Endothelial cell of umbilical vein (primary cell): ENCODE measurements at regions of chr1 and their contacts with region 1.

Region 1: GRCh38 chr1:110118636-110119615 is 6.7 kb downstream of the UBL4B start:
- DNase-seq: no peak
- H3K4me3 ChIP-seq: no peak overlapping the region
- H3K27ac ChIP-seq: no peak overlapping the region
- H3K4me1 ChIP-seq: no peaks in the 10 kb centered on the region
- H3K27me3 ChIP-seq: peaks cover 6 to 15% of the 10 kb centered on the region in 2 experiments
- CTCF ChIP-seq: no peak
- POLR2A ChIP-seq: no peak

Region 2: GRCh38 chr1:109739738-109740660 is 378.9 kb before region 1 on chr1:
- CTCF ChIA-PET with region 1: no interaction called
- POLR2A ChIA-PET with region 1: no interaction called
- dilution Hi-C with region 1: no loop called
- intact Hi-C with region 1: no loop called
- DNase-seq: peak; percentile 81
- H3K4me3 ChIP-seq: peak overlapping the region; percentile 41 to 69 (median 42)
- H3K27ac ChIP-seq: peak overlapping the region; percentile 17
- H3K4me1 ChIP-seq: peaks cover 12% of the 10 kb centered on the region
- H3K27me3 ChIP-seq: peaks cover 0 to 1% of the 10 kb centered on the region in 2 experiments
- CTCF ChIP-seq: no peak
- POLR2A ChIP-seq: peak; percentile 67

Region 3: DNA sequence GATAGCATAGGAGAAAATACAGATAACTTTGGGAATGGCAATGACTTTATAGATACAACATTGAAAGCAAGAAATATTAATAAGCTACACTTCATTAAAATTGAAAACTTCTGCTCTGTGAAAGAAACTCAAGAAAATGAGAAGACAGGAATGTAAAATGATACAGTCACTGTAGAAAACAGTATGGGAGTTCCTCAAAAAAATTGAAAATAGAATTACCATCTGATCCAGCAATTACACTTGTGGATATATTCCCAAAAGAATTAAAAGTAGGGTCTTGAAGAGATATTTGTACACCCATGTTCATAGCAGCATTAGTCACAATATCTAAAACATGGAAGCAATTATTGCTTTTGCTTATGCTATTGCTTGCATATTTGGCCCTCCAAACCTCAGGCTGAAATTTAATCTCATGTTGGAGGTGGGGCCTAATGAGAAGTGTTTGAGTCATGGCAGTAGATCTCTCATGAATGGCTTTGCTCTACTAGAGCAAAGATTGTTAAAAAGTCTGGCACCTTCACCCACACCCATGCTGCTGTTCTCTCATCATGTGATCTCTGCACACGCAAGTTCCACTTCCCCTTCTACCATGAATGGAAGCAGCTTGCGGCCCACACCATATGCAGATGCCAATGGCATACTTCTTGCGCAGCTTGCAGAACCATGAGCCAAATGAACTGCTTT is 149.6 kb before region 1 on chr1:
- CTCF ChIA-PET with region 1: no interaction called
- POLR2A ChIA-PET with region 1: no interaction called
- dilution Hi-C with region 1: no loop called
- intact Hi-C with region 1: no loop called
- DNase-seq: no peak
- H3K4me3 ChIP-seq: no peak overlapping the region
- H3K27ac ChIP-seq: no peak overlapping the region
- H3K4me1 ChIP-seq: peaks cover under 1% of the 10 kb centered on the region
- H3K27me3 ChIP-seq: no peaks in the 10 kb centered on the region
- CTCF ChIP-seq: no peak
- POLR2A ChIP-seq: no peak

Region 4: DNA sequence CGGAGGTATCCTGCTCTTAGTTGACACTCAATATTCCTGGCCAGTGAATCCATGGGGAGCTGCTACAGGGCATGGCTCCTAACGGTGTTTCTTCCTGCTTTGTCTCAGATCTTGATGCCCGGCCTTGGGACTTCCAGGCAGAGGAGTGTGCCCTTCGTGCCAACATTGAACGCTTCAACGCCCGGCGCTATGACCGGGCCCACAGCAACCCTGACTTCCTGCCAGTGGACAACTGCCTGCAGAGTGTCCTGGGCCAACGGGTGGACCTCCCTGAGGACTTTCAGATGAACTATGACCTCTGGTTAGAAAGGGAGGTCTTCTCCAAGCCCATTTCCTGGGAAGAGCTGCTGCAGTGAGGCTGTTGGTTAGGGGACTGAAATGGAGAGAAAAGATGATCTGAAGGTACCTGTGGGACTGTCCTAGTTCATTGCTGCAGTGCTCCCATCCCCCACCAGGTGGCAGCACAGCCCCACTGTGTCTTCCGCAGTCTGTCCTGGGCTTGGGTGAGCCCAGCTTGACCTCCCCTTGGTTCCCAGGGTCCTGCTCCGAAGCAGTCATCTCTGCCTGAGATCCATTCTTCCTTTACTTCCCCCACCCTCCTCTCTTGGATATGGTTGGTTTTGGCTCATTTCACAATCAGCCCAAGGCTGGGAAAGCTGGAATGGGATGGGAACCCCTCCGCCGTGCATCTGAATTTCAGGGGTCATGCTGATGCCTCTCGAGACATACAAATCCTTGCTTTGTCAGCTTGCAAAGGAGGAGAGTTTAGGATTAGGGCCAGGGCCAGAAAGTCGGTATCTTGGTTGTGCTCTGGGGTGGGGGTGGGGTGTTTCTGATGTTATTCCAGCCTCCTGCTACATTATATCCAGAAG is 65.1 kb before region 1 on chr1:
- CTCF ChIA-PET with region 1: interaction called, 11 read pairs
- POLR2A ChIA-PET with region 1: no interaction called
- dilution Hi-C with region 1: no loop called
- intact Hi-C with region 1: loop called (anchors 2 kb)
- DNase-seq: peak; percentile 39
- H3K4me3 ChIP-seq: no peak overlapping the region
- H3K27ac ChIP-seq: no peak overlapping the region
- H3K4me1 ChIP-seq: no peaks in the 10 kb centered on the region
- H3K27me3 ChIP-seq: no peaks in the 10 kb centered on the region
- CTCF ChIP-seq: peak; percentile 83 to 97
- POLR2A ChIP-seq: no peak

Region 5: GRCh38 chr1:110068646-110069403 is 50.1 kb before region 1 on chr1:
- CTCF ChIA-PET with region 1: no interaction called
- POLR2A ChIA-PET with region 1: no interaction called
- dilution Hi-C with region 1: no loop called
- intact Hi-C with region 1: no loop called
- DNase-seq: peak; percentile 18
- H3K4me3 ChIP-seq: no peak overlapping the region
- H3K27ac ChIP-seq: no peak overlapping the region
- H3K4me1 ChIP-seq: no peaks in the 10 kb centered on the region
- H3K27me3 ChIP-seq: peaks cover 67 to 79% of the 10 kb centered on the region in 2 experiments
- CTCF ChIP-seq: no peak
- POLR2A ChIP-seq: no peak

Region 6: GRCh38 chr1:110106013-110106941 is 12.6 kb before region 1 on chr1:
- CTCF ChIA-PET with region 1: interaction called, 30 read pairs
- POLR2A ChIA-PET with region 1: no interaction called
- dilution Hi-C with region 1: no loop called
- intact Hi-C with region 1: no loop called
- DNase-seq: peak; percentile 65
- H3K4me3 ChIP-seq: no peak overlapping the region
- H3K27ac ChIP-seq: no peak overlapping the region
- H3K4me1 ChIP-seq: peaks cover 3% of the 10 kb centered on the region
- H3K27me3 ChIP-seq: peaks cover 0 to 3% of the 10 kb centered on the region in 2 experiments
- CTCF ChIP-seq: peak; percentile 80 to 96
- POLR2A ChIP-seq: no peak

Region 7: DNA sequence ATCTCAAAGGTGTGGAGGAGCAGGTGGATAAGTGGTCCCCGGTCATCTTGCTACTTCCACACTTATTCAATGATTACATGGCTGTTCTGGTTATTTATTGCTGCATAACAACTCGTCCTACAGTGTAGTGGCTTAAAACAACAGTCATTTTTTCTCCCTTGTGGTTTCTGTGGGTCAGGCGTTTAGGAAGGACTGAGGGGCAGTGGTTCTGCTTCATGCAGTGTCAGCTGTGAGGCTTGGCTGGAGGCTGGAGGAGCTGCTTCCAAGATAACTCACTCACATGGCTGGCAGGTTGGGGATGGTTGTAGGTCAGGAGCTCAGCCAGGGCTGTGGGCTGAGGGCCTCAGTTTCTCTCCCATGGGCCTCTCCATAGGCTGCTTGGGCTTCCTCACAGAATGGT is 25.4 kb after region 1 on chr1:
- CTCF ChIA-PET with region 1: no interaction called
- POLR2A ChIA-PET with region 1: no interaction called
- dilution Hi-C with region 1: no loop called
- intact Hi-C with region 1: no loop called
- DNase-seq: no peak
- H3K4me3 ChIP-seq: no peak overlapping the region
- H3K27ac ChIP-seq: no peak overlapping the region
- H3K4me1 ChIP-seq: no peaks in the 10 kb centered on the region
- H3K27me3 ChIP-seq: peaks cover 8 to 24% of the 10 kb centered on the region in 2 experiments
- CTCF ChIP-seq: no peak
- POLR2A ChIP-seq: no peak